Vagina (tissue), 2 donors: ENCODE measurements at regions of chr6 and their contacts with region 1.

Region 1: DNA sequence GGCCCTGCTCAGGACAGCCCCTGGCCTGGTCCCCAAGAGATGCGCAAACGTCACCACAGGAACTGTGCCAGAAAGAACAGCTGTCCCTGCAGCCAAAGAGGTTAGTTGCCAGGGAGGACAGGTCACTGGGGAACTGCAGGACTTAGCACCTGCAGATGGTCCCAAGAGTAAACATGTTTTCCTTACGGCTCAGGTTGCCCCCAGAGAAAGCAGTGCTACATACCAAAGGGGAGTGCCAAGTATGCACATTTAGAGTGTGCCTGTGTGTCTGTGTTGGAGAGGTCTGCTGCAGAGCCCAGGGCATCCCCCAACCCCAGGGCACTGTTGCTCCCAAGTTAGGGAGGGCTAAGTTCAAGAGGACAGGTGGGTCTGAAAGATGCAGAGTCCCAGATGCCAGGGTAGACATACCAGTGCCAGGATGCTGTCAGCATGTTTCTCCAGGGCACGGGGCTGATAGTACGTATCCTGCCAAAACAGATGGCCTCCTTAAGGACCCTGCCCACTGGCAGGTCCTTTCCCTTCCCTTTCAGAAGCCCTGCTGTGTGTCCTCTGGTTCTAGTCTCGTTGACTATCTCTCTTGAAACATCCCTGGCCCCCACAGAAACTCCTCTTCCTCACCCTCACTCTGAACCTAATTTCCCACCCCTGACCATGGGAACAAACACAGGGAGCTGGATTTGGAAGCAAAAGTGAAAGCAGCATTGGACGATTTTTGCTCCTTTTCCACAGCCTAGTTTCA is 1.3 kb downstream of the ABHD16A start:
- DNase-seq: no peak
- H3K4me3 ChIP-seq: peak overlapping the region; percentile 71 to 80
- H3K27ac ChIP-seq: peak overlapping the region; percentile 98
- H3K4me1 ChIP-seq: peaks cover 28% of the 10 kb centered on the region
- H3K27me3 ChIP-seq: no peaks in the 10 kb centered on the region
- CTCF ChIP-seq: no peak
- POLR2A ChIP-seq: no peak

Region 2: DNA sequence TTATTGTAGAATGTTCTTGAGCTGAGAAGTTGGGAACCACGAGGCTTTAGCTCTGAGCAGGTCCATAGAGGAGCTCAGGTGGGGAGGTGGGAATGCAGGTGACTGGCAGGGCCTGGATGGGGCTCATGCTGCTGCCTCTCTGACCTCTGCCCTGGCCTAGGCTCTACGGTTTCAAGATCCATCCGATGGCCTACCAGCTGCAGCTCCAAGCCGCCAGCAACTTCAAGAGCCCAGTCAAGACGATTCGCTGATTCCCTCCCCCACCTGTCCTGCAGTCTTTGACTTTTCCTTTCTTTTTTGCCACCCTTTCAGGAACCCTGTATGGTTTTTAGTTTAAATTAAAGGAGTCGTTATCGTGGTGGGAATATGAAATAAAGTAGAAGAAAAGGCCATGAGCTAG is 32.2 kb before region 1 on chr6 and contains the start of gene LY6G5B:
- intact Hi-C with region 1: loop called (anchors 2 kb)
- DNase-seq: no peak
- H3K4me3 ChIP-seq: no peak within 1 kb of the TSS
- H3K27ac ChIP-seq: no peak within 1 kb of the TSS
- H3K4me1 ChIP-seq: peaks cover 24% of the 10 kb centered on the region
- H3K27me3 ChIP-seq: no peaks in the 10 kb centered on the region
- CTCF ChIP-seq: no peak
- POLR2A ChIP-seq: no peak
- total RNA-seq, gene LY6G5B: 7.4 TPM

Region 3: DNA sequence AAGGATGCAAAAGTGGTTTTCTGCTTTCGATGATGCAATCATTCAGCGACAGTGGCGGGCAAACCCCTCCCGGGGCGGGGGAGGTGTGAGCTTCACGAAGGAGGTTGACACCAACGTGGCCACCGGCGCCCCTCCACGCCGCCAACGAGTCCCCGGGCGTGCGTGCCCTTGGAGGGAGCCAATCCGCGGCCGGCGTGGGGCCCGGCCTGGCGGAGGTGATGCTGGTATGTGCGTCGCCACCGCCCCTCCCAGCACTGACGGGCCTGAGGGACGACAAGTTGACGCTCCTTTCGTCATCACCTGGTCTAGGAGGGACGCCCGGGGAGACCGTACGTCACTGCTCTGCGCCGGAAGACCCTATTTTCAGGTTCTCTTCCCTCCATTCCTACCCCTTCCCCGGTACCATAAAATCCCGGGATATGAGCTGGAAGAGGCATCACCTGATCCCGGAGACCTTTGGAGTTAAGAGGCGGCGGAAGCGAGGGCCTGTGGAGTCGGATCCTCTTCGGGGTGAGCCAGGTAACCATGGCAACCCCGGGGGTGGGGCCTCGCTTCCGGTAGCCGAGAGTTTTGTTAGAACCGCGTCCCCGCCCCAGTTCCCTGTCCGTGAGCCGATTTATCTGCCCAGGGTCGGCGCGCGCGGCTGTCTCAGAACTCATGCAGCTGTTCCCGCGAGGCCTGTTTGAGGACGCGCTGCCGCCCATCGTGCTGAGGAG is 270.3 kb after region 1 on chr6 and contains the start of gene DXO:
- intact Hi-C with region 1: no loop called
- DNase-seq: peak in 1 of 2 donors; percentile 99
- H3K4me3 ChIP-seq: peak within 1 kb of the TSS; percentile 74 to 76
- H3K27ac ChIP-seq: peak within 1 kb of the TSS; percentile 95
- H3K4me1 ChIP-seq: peaks cover 42% of the 10 kb centered on the region
- H3K27me3 ChIP-seq: no peaks in the 10 kb centered on the region
- CTCF ChIP-seq: no peak
- POLR2A ChIP-seq: peak in 1 of 2 donors; percentile 41
- total RNA-seq, gene DXO: 15.5 TPM